ENCODE measurements at regions of chr11 and their contacts with region 1.

Region 1: GRCh38 chr11:91773090-91773489 is 451.5 kb upstream of the FAT3 start:
- DNase-seq: peak; percentile 57 to 65
- H3K4me3 ChIP-seq: no peak overlapping the region
- H3K4me3 Mint-ChIP-seq: no peak overlapping the region
- H3K27ac Mint-ChIP-seq: no peak overlapping the region
- H3K4me1 ChIP-seq: peaks cover 15% of the 10 kb centered on the region
- H3K4me1 Mint-ChIP-seq: peaks cover 25% of the 10 kb centered on the region
- H3K27me3 ChIP-seq: no peaks in the 10 kb centered on the region
- H3K27me3 Mint-ChIP-seq: no peaks in the 10 kb centered on the region
- CTCF ChIP-seq: peak; percentile 10 to 49

Region 2: DNA sequence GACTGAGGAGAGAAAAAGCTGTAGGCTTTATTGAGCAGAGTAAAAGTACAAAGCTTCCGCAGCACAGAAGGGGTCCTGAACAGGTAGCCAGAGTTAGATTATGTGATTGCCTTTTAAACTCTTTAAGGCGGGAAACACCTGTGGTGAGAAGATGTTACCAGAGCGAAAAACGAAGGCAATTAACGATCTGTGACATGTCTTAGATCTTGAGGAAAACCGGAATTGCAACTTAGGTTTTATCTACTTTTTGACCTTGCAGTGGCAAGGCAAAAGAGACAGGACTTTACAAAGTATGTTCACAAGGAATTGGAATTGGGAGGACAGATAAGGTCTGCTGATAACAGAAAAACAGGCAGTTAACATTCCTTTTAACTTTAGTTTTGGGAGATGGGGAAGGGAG is 42.0 kb before region 1 on chr11:
- CTCF ChIA-PET with region 1: no interaction called
- POLR2A ChIA-PET with region 1: no interaction called
- intact Hi-C with region 1: loop called (anchors 1 kb)
- DNase-seq: peak; percentile 57 to 68
- H3K4me3 ChIP-seq: no peak overlapping the region
- H3K4me3 Mint-ChIP-seq: peak overlapping the region; percentile 63
- H3K27ac Mint-ChIP-seq: peak overlapping the region; percentile 63
- H3K4me1 ChIP-seq: peaks cover 30% of the 10 kb centered on the region
- H3K4me1 Mint-ChIP-seq: peaks cover 38% of the 10 kb centered on the region
- H3K27me3 ChIP-seq: no peaks in the 10 kb centered on the region
- H3K27me3 Mint-ChIP-seq: no peaks in the 10 kb centered on the region
- CTCF ChIP-seq: no peak

Region 3: GRCh38 chr11:91749231-91749630 is 23.9 kb before region 1 on chr11:
- CTCF ChIA-PET with region 1: no interaction called
- POLR2A ChIA-PET with region 1: no interaction called
- intact Hi-C with region 1: no loop called
- DNase-seq: no peak
- H3K4me3 ChIP-seq: no peak overlapping the region
- H3K4me3 Mint-ChIP-seq: no peak overlapping the region
- H3K27ac Mint-ChIP-seq: no peak overlapping the region
- H3K4me1 ChIP-seq: peaks cover 5% of the 10 kb centered on the region; the same call in 1 of the 2 replicates
- H3K4me1 Mint-ChIP-seq: no peaks in the 10 kb centered on the region
- H3K27me3 ChIP-seq: no peaks in the 10 kb centered on the region
- H3K27me3 Mint-ChIP-seq: no peaks in the 10 kb centered on the region
- CTCF ChIP-seq: no peak

Region 4: DNA sequence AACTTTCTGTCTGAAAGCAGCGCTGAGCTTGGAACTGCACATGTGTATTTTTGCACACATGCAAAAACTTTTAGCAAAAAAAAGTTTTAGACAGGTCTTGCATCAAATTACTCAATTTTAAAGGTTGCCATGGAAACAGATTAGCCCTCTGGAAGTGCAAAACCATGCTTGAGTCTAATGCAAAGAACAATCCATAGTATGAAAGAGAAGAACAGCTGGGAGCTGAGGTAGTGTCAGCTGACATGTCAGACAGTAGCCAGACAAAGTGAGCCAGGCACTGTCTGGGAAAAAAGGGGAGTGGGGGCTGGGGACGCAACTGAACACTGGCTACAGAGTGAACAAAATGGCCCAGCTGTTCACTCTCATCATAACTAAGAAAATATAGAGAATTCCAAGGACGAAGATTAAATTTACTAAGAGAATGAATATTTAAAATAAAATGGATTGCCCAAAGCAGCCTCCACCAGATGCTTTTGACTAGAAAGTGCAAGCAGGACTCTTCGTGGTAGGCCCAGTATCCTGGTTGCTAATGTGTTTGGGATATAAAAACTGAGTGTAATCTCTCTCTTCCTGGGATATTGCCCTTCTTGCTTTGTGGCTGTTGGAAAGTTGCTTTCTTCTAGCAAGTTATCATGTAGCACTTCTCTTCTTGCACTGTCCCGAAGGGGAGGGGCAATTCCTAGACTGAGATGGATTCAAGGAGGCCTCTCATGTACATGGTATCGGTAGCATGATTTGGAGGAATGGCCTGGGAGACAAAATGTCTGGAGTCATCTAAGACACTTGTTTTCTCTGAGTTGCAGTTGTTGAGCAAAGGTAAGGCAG is 17.5 kb after region 1 on chr11:
- CTCF ChIA-PET with region 1: no interaction called
- POLR2A ChIA-PET with region 1: no interaction called
- intact Hi-C with region 1: no loop called
- DNase-seq: no peak
- H3K4me3 ChIP-seq: no peak overlapping the region
- H3K4me3 Mint-ChIP-seq: no peak overlapping the region
- H3K27ac Mint-ChIP-seq: no peak overlapping the region
- H3K4me1 ChIP-seq: no peaks in the 10 kb centered on the region
- H3K4me1 Mint-ChIP-seq: no peaks in the 10 kb centered on the region
- H3K27me3 ChIP-seq: 0 out of 2 replicates have a peak, but pooled peaks cover 1% of the 10 kb centered on the region
- H3K27me3 Mint-ChIP-seq: no peaks in the 10 kb centered on the region
- CTCF ChIP-seq: no peak

Region 5: GRCh38 chr11:91802475-91802874 is 29.4 kb after region 1 on chr11:
- CTCF ChIA-PET with region 1: no interaction called
- POLR2A ChIA-PET with region 1: no interaction called
- intact Hi-C with region 1: loop called (anchors 2 kb)
- DNase-seq: no peak
- H3K4me3 ChIP-seq: no peak overlapping the region
- H3K4me3 Mint-ChIP-seq: no peak overlapping the region
- H3K27ac Mint-ChIP-seq: no peak overlapping the region
- H3K4me1 ChIP-seq: peaks cover 27% of the 10 kb centered on the region
- H3K4me1 Mint-ChIP-seq: peaks cover 22% of the 10 kb centered on the region
- H3K27me3 ChIP-seq: no peaks in the 10 kb centered on the region
- H3K27me3 Mint-ChIP-seq: no peaks in the 10 kb centered on the region
- CTCF ChIP-seq: no peak

Region 6: GRCh38 chr11:92070026-92070889 is 297.2 kb after region 1 on chr11:
- CTCF ChIA-PET with region 1: no interaction called
- POLR2A ChIA-PET with region 1: no interaction called
- intact Hi-C with region 1: loop called (anchors 1 kb)
- DNase-seq: no peak
- H3K4me3 ChIP-seq: no peak overlapping the region
- H3K4me3 Mint-ChIP-seq: no peak overlapping the region
- H3K27ac Mint-ChIP-seq: no peak overlapping the region
- H3K4me1 ChIP-seq: no peaks in the 10 kb centered on the region
- H3K4me1 Mint-ChIP-seq: no peaks in the 10 kb centered on the region
- H3K27me3 ChIP-seq: no peaks in the 10 kb centered on the region
- H3K27me3 Mint-ChIP-seq: peaks cover 4% of the 10 kb centered on the region
- CTCF ChIP-seq: peak in 1 of 2 experiments; percentile 18

Region 7: DNA sequence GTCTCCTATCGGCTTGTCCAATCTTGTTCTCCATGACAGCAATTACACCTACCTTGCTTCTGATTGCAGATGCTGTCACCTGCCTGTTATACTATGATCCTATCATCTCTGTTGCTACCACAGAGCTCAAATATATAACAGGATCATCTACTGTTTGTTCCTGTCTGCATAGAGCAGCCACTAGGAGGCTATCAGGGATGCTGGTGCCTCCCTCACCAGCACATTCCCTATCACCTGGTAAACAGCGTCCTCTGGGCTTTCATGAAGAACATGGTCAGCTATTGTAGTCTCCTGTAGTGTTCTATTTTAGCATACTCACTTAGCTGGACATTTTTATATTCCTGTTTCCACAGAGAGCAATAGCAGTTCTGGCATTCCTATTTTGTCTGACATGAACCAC is 363.7 kb after region 1 on chr11:
- CTCF ChIA-PET with region 1: no interaction called
- POLR2A ChIA-PET with region 1: no interaction called
- intact Hi-C with region 1: loop called (anchors 1 kb)
- DNase-seq: peak in 1 of 2 experiments; percentile 39
- H3K4me3 ChIP-seq: no peak overlapping the region
- H3K4me3 Mint-ChIP-seq: no peak overlapping the region
- H3K27ac Mint-ChIP-seq: no peak overlapping the region
- H3K4me1 ChIP-seq: no peaks in the 10 kb centered on the region
- H3K4me1 Mint-ChIP-seq: no peaks in the 10 kb centered on the region
- H3K27me3 ChIP-seq: no peaks in the 10 kb centered on the region
- H3K27me3 Mint-ChIP-seq: no peaks in the 10 kb centered on the region
- CTCF ChIP-seq: peak; percentile 31 to 68

Region 8: DNA sequence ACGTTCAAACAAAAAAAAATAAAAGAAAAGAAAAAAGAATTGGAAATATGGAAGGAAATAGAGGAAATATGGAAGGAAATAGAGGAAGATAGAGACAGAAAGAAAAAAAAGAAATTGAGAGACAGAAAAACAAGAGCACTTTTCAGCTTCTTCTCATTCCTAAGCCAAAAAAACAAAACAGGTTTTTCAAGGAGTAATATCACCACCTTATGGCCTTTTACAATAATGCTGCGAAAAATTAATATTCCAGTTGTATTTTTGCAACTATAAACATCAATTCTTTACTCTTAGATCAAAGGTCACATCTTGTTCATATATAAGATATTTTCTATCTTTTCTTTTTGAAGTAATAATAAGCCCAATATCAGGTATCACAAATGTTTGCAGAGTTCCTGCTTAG is 779.9 kb after region 1 on chr11:
- CTCF ChIA-PET with region 1: no interaction called
- POLR2A ChIA-PET with region 1: no interaction called
- intact Hi-C with region 1: loop called (anchors 1 kb)
- DNase-seq: no peak
- H3K4me3 ChIP-seq: no peak overlapping the region
- H3K4me3 Mint-ChIP-seq: no peak overlapping the region
- H3K27ac Mint-ChIP-seq: no peak overlapping the region
- H3K4me1 ChIP-seq: no peaks in the 10 kb centered on the region
- H3K4me1 Mint-ChIP-seq: no peaks in the 10 kb centered on the region
- H3K27me3 ChIP-seq: no peaks in the 10 kb centered on the region
- H3K27me3 Mint-ChIP-seq: peaks cover 7% of the 10 kb centered on the region
- CTCF ChIP-seq: peak; percentile 23 to 60

Region 9: DNA sequence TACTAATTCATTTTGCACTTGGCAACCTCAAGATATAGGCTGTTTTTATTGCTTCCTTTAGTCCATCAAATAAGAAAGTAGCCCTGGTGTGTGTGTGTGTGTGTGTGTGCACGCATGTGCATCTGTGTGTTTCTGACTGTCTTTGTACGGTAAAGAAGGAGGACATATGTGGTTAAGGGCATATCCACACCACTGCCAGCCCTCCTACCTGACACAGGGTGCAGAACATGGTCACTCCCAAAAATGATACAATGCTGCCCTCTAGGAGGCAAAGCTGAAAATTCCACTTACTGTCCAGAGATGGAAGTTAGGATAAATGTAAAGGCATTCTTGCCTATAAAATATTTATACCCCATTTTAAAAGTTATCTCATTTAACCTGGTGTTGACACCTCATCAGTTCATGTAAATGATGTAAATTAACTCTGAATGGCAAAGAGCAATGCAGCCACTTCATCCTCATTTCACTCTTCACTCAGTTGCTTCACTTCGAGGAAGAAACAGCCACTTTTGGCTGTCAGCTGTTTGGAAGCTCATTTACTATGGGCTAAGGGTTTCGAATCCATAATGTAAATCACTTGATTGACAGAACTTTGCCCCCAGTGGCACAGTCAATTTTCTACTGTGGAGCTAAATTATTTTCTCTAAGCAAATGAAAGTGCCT is 1113.3 kb after region 1 on chr11:
- CTCF ChIA-PET with region 1: no interaction called
- POLR2A ChIA-PET with region 1: no interaction called
- intact Hi-C with region 1: loop called (anchors 1 kb)
- DNase-seq: peak; percentile 68 to 77
- H3K4me3 ChIP-seq: no peak overlapping the region
- H3K4me3 Mint-ChIP-seq: no peak overlapping the region
- H3K27ac Mint-ChIP-seq: no peak overlapping the region
- H3K4me1 ChIP-seq: no peaks in the 10 kb centered on the region
- H3K4me1 Mint-ChIP-seq: no peaks in the 10 kb centered on the region
- H3K27me3 ChIP-seq: no peaks in the 10 kb centered on the region
- H3K27me3 Mint-ChIP-seq: peaks cover 13% of the 10 kb centered on the region
- CTCF ChIP-seq: peak; percentile 85 to 89